Psoas muscle (tissue), 8 donors: ENCODE measurements at regions of chr12 and their contacts with region 1.

Region 1: DNA sequence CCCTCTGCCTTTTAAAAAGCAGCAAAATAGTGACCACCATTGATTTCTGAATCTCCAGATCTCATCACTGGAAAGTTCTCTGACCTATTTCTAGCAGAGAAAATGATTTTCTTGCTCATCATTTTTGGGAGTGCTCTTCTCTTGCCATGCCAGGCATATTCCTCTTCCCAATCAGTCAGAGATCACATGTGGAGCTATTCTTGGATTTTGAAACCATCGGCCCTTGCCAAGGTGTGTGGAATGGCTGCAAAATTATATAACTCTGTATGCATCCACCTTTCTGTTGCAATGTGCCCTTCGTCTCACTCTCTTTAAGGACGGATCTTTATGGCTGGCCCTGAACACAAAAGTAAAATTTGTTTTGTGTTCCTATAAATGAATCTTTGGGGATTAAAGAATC is 25.5 kb upstream of the LDHB start:
- DNase-seq: no peak
- ATAC-seq: no peak
- H3K4me3 ChIP-seq: no peak overlapping the region
- H3K27ac ChIP-seq: no peak overlapping the region
- H3K4me1 ChIP-seq: peaks cover 5% of the 10 kb centered on the region
- H3K27me3 ChIP-seq: no peaks in the 10 kb centered on the region
- CTCF ChIP-seq: no peak

Region 2: GRCh38 chr12:21527451-21528180 is 155.5 kb before region 1 on chr12:
- intact Hi-C with region 1: loop called in 1 of 2 experiments (anchors 5 kb)
- DNase-seq: peak; percentile 53 to 83
- ATAC-seq: peak; percentile 92 to 98 (median 96)
- H3K4me3 ChIP-seq: peak overlapping the region; percentile 87
- H3K27ac ChIP-seq: peak overlapping the region; percentile 78
- H3K4me1 ChIP-seq: peaks cover 20% of the 10 kb centered on the region
- H3K27me3 ChIP-seq: no peaks in the 10 kb centered on the region
- CTCF ChIP-seq: no peak

Region 3: GRCh38 chr12:21607701-21608100 is 75.4 kb before region 1 on chr12:
- intact Hi-C with region 1: loop called in 1 of 2 experiments (anchors 5 kb)
- DNase-seq: no peak
- ATAC-seq: no peak
- H3K4me3 ChIP-seq: no peak overlapping the region
- H3K27ac ChIP-seq: no peak overlapping the region
- H3K4me1 ChIP-seq: no peaks in the 10 kb centered on the region
- H3K27me3 ChIP-seq: no peaks in the 10 kb centered on the region
- CTCF ChIP-seq: peak; percentile 36